ENCODE measurements at regions of chr1 and their contacts with region 1.

Region 1: GRCh38 chr1:20430355-20431175 is 55.4 kb downstream of the CAMK2N1 start:
- DNase-seq: peak in 5 of 9 experiments; percentile 3 to 47 (median 23)
- ATAC-seq: no peak
- H3K4me3 ChIP-seq: no peak overlapping the region
- H3K4me3 Mint-ChIP-seq: no peak overlapping the region
- H3K27ac ChIP-seq: no peak overlapping the region
- H3K27ac Mint-ChIP-seq: no peak overlapping the region
- H3K4me1 ChIP-seq: no peaks in the 10 kb centered on the region
- H3K4me1 Mint-ChIP-seq: no peaks in the 10 kb centered on the region
- H3K27me3 ChIP-seq: peaks cover 5 to 6% of the 10 kb centered on the region in 2 experiments
- H3K27me3 Mint-ChIP-seq: peaks cover 55% of the 10 kb centered on the region
- CTCF ChIP-seq: peak; percentile 54

Region 2: GRCh38 chr1:19918057-19918456 is 512.5 kb before region 1 on chr1:
- CTCF ChIA-PET with region 1: no interaction called
- POLR2A ChIA-PET with region 1: no interaction called
- intact Hi-C with region 1: loop called in 1 of 2 experiments (anchors 10 kb)
- DNase-seq: peak; percentile 67 to 88 (median 81)
- ATAC-seq: peak; percentile 57
- H3K4me3 ChIP-seq: no peak overlapping the region
- H3K4me3 Mint-ChIP-seq: no peak overlapping the region
- H3K27ac ChIP-seq: no peak overlapping the region
- H3K27ac Mint-ChIP-seq: no peak overlapping the region
- H3K4me1 ChIP-seq: no peaks in the 10 kb centered on the region
- H3K4me1 Mint-ChIP-seq: peaks cover 2% of the 10 kb centered on the region
- H3K27me3 ChIP-seq: no peaks in the 10 kb centered on the region
- H3K27me3 Mint-ChIP-seq: peaks cover 5% of the 10 kb centered on the region
- CTCF ChIP-seq: peak; percentile 88

Region 3: DNA sequence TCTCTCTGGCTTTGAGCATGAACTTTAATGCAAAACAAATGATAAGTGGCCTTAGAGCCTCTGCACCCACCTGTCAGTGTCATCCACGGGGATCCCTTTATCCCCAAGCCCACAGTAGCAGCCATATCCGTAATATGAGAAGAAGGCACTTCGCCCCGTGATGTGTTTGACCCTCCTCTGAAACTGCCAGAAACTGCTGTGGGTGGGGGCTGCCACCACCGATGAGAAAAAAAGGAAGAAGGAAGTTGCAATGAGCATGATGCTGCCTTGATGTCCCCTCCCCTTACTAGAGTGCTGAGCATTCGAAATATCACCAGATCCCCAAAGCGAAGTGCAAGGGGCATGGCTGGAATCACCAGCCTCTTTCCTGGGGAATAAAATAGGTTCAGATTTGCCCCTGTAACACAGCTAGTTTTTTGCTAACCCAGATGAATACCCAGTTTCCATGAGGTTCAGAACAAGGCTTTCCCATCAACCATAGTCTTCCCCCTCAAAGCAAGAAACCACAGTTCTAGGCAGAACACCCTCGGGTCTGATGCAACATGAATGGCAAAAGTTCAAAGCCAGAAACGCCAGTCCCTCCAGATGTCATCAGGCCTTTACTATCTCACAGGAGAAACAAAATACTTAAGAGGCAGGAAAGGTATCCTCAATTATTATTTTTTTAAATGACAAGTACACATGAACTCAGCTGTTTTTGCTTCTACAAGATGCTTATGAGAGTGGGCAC is 255.5 kb before region 1 on chr1:
- CTCF ChIA-PET with region 1: no interaction called
- POLR2A ChIA-PET with region 1: no interaction called
- intact Hi-C with region 1: no loop called
- DNase-seq: no peak
- ATAC-seq: no peak
- H3K4me3 ChIP-seq: no peak overlapping the region
- H3K4me3 Mint-ChIP-seq: no peak overlapping the region
- H3K27ac ChIP-seq: no peak overlapping the region
- H3K27ac Mint-ChIP-seq: no peak overlapping the region
- H3K4me1 ChIP-seq: peaks cover 3% of the 10 kb centered on the region
- H3K4me1 Mint-ChIP-seq: peaks cover 6% of the 10 kb centered on the region
- H3K27me3 ChIP-seq: no peaks in the 10 kb centered on the region
- H3K27me3 Mint-ChIP-seq: no peaks in the 10 kb centered on the region
- CTCF ChIP-seq: no peak

Region 4: DNA sequence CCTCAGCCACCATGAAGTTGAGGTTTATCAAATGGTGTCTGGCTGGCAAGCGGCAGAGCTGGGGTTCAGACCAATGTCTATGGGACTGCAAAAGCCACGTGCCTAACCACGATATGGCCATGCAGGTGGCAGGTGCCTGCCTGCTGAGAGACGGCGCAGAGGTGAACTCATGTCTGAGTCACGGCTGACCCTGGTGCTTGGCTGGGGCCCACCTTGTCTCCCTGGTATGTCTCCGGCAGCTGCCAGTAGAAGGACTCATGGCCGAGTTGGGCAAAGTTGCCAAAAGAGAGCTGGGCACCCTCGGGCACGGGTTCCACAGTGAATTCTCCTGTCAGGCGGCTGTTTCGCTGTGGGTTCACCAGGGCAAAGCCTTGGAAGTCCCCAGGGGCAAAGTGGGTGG is 1441.4 kb after region 1 on chr1:
- CTCF ChIA-PET with region 1: no interaction called
- POLR2A ChIA-PET with region 1: no interaction called
- intact Hi-C with region 1: no loop called
- DNase-seq: no peak
- ATAC-seq: no peak
- H3K4me3 ChIP-seq: no peak overlapping the region
- H3K4me3 Mint-ChIP-seq: no peak overlapping the region
- H3K27ac ChIP-seq: no peak overlapping the region
- H3K27ac Mint-ChIP-seq: no peak overlapping the region
- H3K4me1 ChIP-seq: no peaks in the 10 kb centered on the region
- H3K4me1 Mint-ChIP-seq: no peaks in the 10 kb centered on the region
- H3K27me3 ChIP-seq: no peaks in the 10 kb centered on the region
- H3K27me3 Mint-ChIP-seq: no peaks in the 10 kb centered on the region
- CTCF ChIP-seq: no peak